ENCODE measurements at regions of chr6 and their contacts with region 1.

Region 1: DNA sequence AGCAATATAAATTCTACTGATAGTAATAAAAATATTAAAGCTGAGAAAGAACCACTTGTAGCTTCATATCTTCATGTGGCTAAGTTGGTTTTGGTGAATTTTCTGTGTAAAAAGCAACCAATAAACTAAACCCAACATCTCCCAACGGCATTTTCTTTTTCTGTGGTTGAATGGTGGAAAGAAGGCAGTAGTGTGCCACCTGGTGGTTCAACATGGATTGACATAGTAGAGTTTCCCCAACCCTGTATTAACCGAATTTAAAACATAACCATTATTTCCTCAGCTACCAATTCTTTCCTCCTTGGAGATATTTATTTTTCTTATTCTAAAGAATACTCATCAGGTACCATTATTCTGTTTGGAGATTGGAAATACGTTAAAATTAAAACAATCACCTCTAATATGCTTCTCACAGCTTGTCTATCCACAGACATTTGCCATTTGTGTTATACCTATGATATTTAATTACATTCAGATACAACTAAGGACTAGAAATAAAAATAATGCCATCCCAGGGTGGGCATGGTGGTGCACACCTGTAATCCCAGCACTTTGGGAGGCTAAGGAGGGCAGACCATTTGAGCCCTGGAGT is 117.1 kb upstream of the EEF1E1 start:
- DNase-seq: peak in 1 of 2 experiments; percentile 52
- H3K4me3 ChIP-seq: no peak overlapping the region
- H3K4me3 Mint-ChIP-seq: no peak overlapping the region
- H3K27ac Mint-ChIP-seq: no peak overlapping the region
- H3K4me1 ChIP-seq: peaks cover 18% of the 10 kb centered on the region
- H3K4me1 Mint-ChIP-seq: peaks cover 14% of the 10 kb centered on the region
- H3K27me3 ChIP-seq: no peaks in the 10 kb centered on the region
- H3K27me3 Mint-ChIP-seq: no peaks in the 10 kb centered on the region
- CTCF ChIP-seq: peak; percentile 50 to 71

Region 2: GRCh38 chr6:8195040-8195713 is 24.3 kb before region 1 on chr6:
- CTCF ChIA-PET with region 1: interaction called, 9 read pairs
- POLR2A ChIA-PET with region 1: no interaction called
- intact Hi-C with region 1: loop called (anchors 1 kb)
- DNase-seq: peak; percentile 52 to 63
- H3K4me3 ChIP-seq: no peak overlapping the region
- H3K4me3 Mint-ChIP-seq: peak overlapping the region; percentile 47
- H3K27ac Mint-ChIP-seq: peak overlapping the region; percentile 45
- H3K4me1 ChIP-seq: peaks cover 55% of the 10 kb centered on the region
- H3K4me1 Mint-ChIP-seq: peaks cover 42% of the 10 kb centered on the region
- H3K27me3 ChIP-seq: no peaks in the 10 kb centered on the region
- H3K27me3 Mint-ChIP-seq: no peaks in the 10 kb centered on the region
- CTCF ChIP-seq: peak; percentile 41 to 57